ENCODE measurements at regions of chr2 and their contacts with region 1.

Region 1: GRCh38 chr2:165587335-165587938 is 117.9 kb downstream of the CSRNP3 start:
- DNase-seq: peak; percentile 86
- H3K4me3 ChIP-seq: peak overlapping the region; percentile 43
- H3K27ac ChIP-seq: peak overlapping the region; percentile 93
- H3K4me1 ChIP-seq: peaks cover 63% of the 10 kb centered on the region
- CTCF ChIP-seq: no peak

Region 2: GRCh38 chr2:165573534-165574461 is 13.6 kb before region 1 on chr2:
- CTCF ChIA-PET with region 1: interaction called, 4 read pairs
- POLR2A ChIA-PET with region 1: interaction called, 22 read pairs
- intact Hi-C with region 1: no loop called
- DNase-seq: peak; percentile 40
- H3K4me3 ChIP-seq: peak overlapping the region; percentile 59
- H3K27ac ChIP-seq: peak overlapping the region; percentile 44
- H3K4me1 ChIP-seq: peaks cover 7% of the 10 kb centered on the region
- CTCF ChIP-seq: no peak

Region 3: GRCh38 chr2:165675551-165675968 is 88.1 kb after region 1 on chr2:
- CTCF ChIA-PET with region 1: no interaction called
- POLR2A ChIA-PET with region 1: no interaction called
- intact Hi-C with region 1: loop called (anchors 10 kb)
- DNase-seq: no peak
- H3K4me3 ChIP-seq: no peak overlapping the region
- H3K27ac ChIP-seq: no peak overlapping the region
- H3K4me1 ChIP-seq: peaks cover 25% of the 10 kb centered on the region
- CTCF ChIP-seq: no peak

Measured in OCI-LY7 (cell line).